CD4-positive, alpha-beta T cell (primary cell): ENCODE measurements at regions of chr17 and their contacts with region 1.

Region 1: DNA sequence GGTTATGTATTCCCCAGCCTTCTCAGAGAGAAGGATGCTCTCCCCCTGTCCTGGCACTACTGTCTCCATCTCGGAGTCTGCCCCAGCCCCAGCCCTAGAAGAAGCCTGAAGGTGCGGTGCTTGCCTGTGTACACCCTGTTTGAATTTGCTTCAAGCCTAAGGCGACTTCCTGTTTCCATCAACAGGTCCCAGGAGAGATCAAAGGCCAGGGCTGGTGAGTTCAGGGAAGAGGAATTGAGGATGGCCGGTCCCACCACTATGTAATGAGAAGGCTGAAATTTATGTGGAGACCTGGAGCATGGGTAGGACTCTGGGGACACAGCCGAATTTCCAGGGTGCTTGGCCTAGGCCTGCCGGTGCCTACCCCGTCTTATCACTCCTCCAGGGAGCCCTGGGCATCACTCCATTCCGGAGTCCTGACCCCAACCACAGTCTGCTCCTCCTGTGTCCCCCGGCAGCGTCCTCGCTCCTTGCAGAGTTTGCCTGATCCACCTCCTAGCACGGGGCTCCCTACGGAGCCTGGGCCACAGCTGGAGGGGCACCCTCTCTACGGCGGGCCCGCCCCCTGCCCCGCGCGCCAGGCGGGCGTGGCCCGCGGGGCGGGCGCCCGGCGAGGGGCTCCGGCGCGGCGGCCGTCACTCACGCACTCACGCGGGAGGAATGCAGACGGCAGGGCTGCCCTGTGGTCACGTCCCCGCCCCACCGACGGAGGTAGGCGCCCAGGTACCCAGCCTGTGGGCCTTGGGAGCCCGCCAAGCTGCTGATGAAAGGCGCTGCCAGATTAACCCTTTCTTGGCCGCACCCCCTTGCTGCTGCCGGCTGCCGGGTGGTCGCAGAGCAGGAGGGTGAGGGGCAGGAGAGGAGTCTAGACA is 53.8 kb upstream of the TAC4 start:
- DNase-seq: no peak
- ATAC-seq: no peak
- H3K4me3 ChIP-seq: no peak overlapping the region
- H3K4me3 Mint-ChIP-seq: no peak overlapping the region
- H3K27ac ChIP-seq: no peak overlapping the region
- H3K27ac Mint-ChIP-seq: no peak overlapping the region
- H3K4me1 ChIP-seq: peaks cover 5% of the 10 kb centered on the region
- H3K4me1 Mint-ChIP-seq: no peaks in the 10 kb centered on the region
- H3K27me3 ChIP-seq: peaks cover 55 to 84% of the 10 kb centered on the region in 2 experiments
- H3K27me3 Mint-ChIP-seq: peaks cover 88% of the 10 kb centered on the region
- CTCF ChIP-seq: no peak

Region 2: GRCh38 chr17:49913177-49914083 is 11.7 kb after region 1 on chr17:
- CTCF ChIA-PET with region 1: no interaction called
- POLR2A ChIA-PET with region 1: no interaction called
- intact Hi-C with region 1: no loop called
- DNase-seq: no peak
- ATAC-seq: no peak
- H3K4me3 ChIP-seq: no peak overlapping the region
- H3K4me3 Mint-ChIP-seq: no peak overlapping the region
- H3K27ac ChIP-seq: no peak overlapping the region
- H3K27ac Mint-ChIP-seq: no peak overlapping the region
- H3K4me1 ChIP-seq: peaks cover 8% of the 10 kb centered on the region
- H3K4me1 Mint-ChIP-seq: no peaks in the 10 kb centered on the region
- H3K27me3 ChIP-seq: peaks cover 52 to 54% of the 10 kb centered on the region in 2 experiments
- H3K27me3 Mint-ChIP-seq: peaks cover 91% of the 10 kb centered on the region
- CTCF ChIP-seq: no peak

Region 3: DNA sequence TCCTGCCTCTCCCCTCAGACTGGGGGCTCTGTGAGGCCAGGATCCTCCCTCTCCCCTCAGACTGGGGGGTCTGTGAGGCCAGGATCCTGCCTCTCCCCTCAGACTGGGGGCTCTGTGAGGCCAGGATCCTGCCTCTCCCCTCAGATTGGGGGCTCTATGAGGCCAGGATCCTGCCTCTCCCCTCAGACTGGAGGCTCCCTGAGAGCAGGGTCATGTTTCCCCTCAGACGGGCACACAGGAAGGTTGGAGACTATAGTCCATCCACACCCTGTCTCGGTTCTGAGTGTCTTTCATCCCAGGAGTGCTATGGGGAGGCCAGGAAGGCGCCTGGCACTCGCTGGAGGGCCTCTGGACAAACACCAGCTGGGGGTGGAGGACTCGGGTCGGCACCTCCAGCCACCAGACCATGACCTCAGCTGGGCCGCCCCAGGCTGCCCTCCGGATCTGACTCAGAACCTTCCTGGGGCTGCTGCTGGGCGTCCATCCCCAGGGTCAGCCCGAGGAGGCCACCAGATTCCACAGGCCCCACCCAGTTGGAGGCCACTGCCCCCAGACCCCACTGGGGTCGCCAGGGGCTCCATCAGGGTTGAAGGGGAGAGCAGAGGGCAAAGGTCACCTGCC is 45.4 kb after region 1 on chr17:
- CTCF ChIA-PET with region 1: no interaction called
- POLR2A ChIA-PET with region 1: no interaction called
- intact Hi-C with region 1: loop called in 1 of 2 experiments (anchors 5 kb)
- DNase-seq: no peak
- ATAC-seq: no peak
- H3K4me3 ChIP-seq: no peak overlapping the region
- H3K4me3 Mint-ChIP-seq: no peak overlapping the region
- H3K27ac ChIP-seq: no peak overlapping the region
- H3K27ac Mint-ChIP-seq: no peak overlapping the region
- H3K4me1 ChIP-seq: no peaks in the 10 kb centered on the region
- H3K4me1 Mint-ChIP-seq: no peaks in the 10 kb centered on the region
- H3K27me3 ChIP-seq: peaks cover 30 to 36% of the 10 kb centered on the region in 2 experiments
- H3K27me3 Mint-ChIP-seq: peaks cover 61% of the 10 kb centered on the region
- CTCF ChIP-seq: no peak